ENCODE measurements at regions of chr6 and their contacts with region 1.

Region 1: DNA sequence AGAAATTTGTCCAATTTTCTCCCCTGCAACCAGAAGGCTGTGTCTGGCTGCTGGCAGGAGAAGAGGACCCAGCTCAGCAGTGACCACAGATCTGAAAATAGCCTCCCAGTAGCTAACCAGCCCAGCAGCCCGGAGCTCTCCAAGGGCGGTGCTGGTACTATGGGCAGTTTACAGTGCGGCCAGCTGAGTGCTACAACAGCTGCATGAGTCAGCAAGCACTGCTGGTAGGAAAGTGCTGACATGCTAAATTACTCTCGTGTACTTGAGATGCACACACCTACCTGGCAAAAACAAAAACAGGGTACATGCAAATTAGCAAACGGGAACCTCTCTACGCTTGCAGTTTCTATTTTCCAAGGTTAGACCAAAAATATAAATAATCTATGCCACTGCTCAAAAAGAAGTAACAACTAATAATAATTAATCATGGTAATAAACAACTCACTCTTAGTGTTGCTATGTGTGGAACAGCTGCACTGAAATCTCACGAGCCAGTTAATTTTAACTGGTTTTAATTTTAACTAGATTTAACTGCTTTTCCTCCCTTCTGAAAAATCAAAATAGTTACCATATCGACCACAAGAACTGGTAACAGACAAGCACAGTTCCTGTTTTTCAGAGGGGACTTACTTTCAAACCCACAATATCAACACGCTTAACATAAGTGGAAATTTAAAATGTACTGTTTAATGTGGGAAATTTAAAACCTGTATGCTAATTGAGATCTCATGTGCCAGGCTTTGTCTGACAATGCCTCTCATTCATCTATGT is 10.8 kb downstream of the BACH2 start:
- DNase-seq: peak; percentile 70
- H3K4me3 Mint-ChIP-seq: peak overlapping the region; percentile 73
- H3K27ac Mint-ChIP-seq: peak overlapping the region; percentile 96
- H3K4me1 Mint-ChIP-seq: peaks cover 93% of the 10 kb centered on the region
- H3K27me3 Mint-ChIP-seq: no peaks in the 10 kb centered on the region

Region 2: GRCh38 chr6:90019216-90019615 is 266.6 kb before region 1 on chr6:
- CTCF ChIA-PET with region 1: no interaction called
- DNase-seq: no peak
- H3K4me3 Mint-ChIP-seq: no peak overlapping the region
- H3K27ac Mint-ChIP-seq: no peak overlapping the region
- H3K4me1 Mint-ChIP-seq: peaks cover 18% of the 10 kb centered on the region
- H3K27me3 Mint-ChIP-seq: no peaks in the 10 kb centered on the region

Region 3: GRCh38 chr6:90107771-90108282 is 178.0 kb before region 1 on chr6:
- CTCF ChIA-PET with region 1: no interaction called
- DNase-seq: peak; percentile 53
- H3K4me3 Mint-ChIP-seq: no peak overlapping the region
- H3K27ac Mint-ChIP-seq: peak overlapping the region; percentile 24
- H3K4me1 Mint-ChIP-seq: peaks cover 96% of the 10 kb centered on the region
- H3K27me3 Mint-ChIP-seq: no peaks in the 10 kb centered on the region

Region 4: GRCh38 chr6:90216072-90216977 is 69.5 kb before region 1 on chr6:
- CTCF ChIA-PET with region 1: interaction called, 29 read pairs
- DNase-seq: peak; percentile 56
- H3K4me3 Mint-ChIP-seq: peak overlapping the region; percentile 17
- H3K27ac Mint-ChIP-seq: no peak overlapping the region
- H3K4me1 Mint-ChIP-seq: peaks cover 31% of the 10 kb centered on the region
- H3K27me3 Mint-ChIP-seq: no peaks in the 10 kb centered on the region

Region 5: DNA sequence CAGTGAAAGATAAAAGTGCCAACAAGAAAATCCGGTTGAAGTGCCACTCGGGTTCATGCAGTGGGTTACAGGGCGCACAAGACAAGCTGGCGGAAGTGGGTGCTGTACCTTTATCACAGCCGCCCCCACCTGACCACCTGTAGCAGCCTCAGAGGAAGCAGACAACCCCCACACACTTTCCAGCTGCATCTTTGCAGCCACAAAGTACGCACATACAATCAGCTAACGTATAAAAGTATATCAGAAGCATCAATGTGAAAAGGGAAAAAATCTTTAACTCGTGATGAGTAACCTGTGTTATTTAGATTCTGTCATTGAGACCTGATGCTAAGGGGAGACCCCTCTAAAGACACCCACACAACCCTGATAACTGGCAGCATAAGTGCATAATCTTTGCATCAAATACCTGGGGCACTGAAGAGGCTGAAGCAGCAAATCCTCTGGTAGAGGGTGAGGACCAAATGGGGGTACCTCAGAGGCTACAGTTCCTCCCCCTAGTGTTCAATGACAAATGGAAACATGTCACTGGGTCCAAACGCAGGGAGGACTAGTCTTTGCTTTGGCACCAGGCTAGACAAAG is 11.3 kb before region 1 on chr6:
- CTCF ChIA-PET with region 1: interaction called, 12 read pairs
- DNase-seq: peak; percentile 92
- H3K4me3 Mint-ChIP-seq: peak overlapping the region; percentile 67
- H3K27ac Mint-ChIP-seq: peak overlapping the region; percentile 98
- H3K4me1 Mint-ChIP-seq: peaks cover 95% of the 10 kb centered on the region
- H3K27me3 Mint-ChIP-seq: no peaks in the 10 kb centered on the region

Region 6: GRCh38 chr6:90296346-90297114 is 10.7 kb after region 1 on chr6 and contains the start of gene BACH2:
- CTCF ChIA-PET with region 1: interaction called, 11 read pairs
- DNase-seq: peak; percentile 97
- H3K4me3 Mint-ChIP-seq: peak within 1 kb of the TSS; percentile 81
- H3K27ac Mint-ChIP-seq: peak within 1 kb of the TSS; percentile 99
- H3K4me1 Mint-ChIP-seq: peaks cover 29% of the 10 kb centered on the region
- H3K27me3 Mint-ChIP-seq: peaks cover 21% of the 10 kb centered on the region